Lower leg skin (tissue), 4 donors: ENCODE measurements at regions of chr6 and their contacts with region 1.

Region 1: DNA sequence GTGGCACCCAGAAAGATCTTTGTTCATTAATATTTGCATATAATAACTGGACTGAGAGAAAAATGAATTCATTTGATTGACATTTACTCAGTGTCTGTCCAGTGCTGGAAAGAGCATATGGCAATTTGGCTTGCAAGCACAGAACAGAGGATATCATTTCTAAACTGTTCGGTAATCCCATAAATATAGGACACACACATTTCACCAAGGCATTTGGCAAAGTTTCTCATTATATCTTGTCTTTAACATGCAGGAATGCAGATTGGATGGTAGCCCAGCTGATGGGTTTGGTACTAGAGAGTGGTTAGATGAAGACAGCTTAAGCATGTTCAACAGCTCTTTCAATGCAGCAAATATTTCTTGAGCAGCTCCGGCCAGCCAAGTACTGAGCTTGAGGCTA is 259.2 kb downstream of the PRKN start:
- DNase-seq: peak in 1 of 2 donors; percentile 53
- H3K4me3 ChIP-seq: no peak overlapping the region
- CTCF ChIP-seq: no peak
- POLR2A ChIP-seq: no peak

Region 2: GRCh38 chr6:162140251-162140852 is 328.0 kb before region 1 on chr6:
- intact Hi-C with region 1: loop called (anchors 2 kb)
- DNase-seq: peak in 1 of 2 donors; percentile 25
- H3K4me3 ChIP-seq: no peak overlapping the region
- CTCF ChIP-seq: no peak
- POLR2A ChIP-seq: no peak